CD4-positive, alpha-beta T cell (primary cell): ENCODE measurements at regions of chr1 and their contacts with region 1.

Region 1: GRCh38 chr1:172671591-172671990 is 12.7 kb downstream of the FASLG start:
- DNase-seq: no peak
- ATAC-seq: no peak
- H3K4me3 ChIP-seq: no peak overlapping the region
- H3K4me3 Mint-ChIP-seq: peak overlapping the region; percentile 13
- H3K27ac ChIP-seq: no peak overlapping the region
- H3K27ac Mint-ChIP-seq: no peak overlapping the region
- H3K4me1 ChIP-seq: peaks cover 37% of the 10 kb centered on the region
- H3K4me1 Mint-ChIP-seq: peaks cover 67% of the 10 kb centered on the region
- H3K27me3 ChIP-seq: no peaks in the 10 kb centered on the region
- H3K27me3 Mint-ChIP-seq: no peaks in the 10 kb centered on the region
- CTCF ChIP-seq: no peak

Region 2: DNA sequence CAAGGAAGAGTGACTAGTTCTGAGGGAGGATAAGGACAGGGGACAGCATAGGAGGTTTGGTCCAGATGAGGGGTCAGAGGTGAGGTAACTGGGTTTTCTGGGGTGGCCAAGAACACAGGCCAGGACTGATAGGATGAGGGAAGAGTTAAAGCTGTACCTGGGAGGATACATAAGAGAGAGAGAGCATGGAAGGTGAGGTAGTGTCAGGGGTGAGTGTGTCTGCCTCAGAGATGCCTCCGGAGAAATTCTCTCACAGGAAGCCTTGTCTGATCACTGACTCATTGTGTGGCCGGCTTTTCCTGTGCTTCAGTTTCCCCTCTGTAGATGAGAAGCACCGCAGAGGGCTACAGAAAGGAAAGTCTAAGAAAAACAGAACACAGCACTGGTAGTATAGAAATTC is 27.5 kb after region 1 on chr1:
- CTCF ChIA-PET with region 1: interaction called, 5 read pairs
- POLR2A ChIA-PET with region 1: interaction called, 7 read pairs
- intact Hi-C with region 1: loop called (anchors 1 to 5 kb)
- DNase-seq: peak; percentile 45 to 90 (median 67)
- ATAC-seq: peak; percentile 84
- H3K4me3 ChIP-seq: no peak overlapping the region
- H3K4me3 Mint-ChIP-seq: peak overlapping the region; percentile 46
- H3K27ac ChIP-seq: peak overlapping the region; percentile 73 to 83
- H3K27ac Mint-ChIP-seq: no peak overlapping the region
- H3K4me1 ChIP-seq: peaks cover 70% of the 10 kb centered on the region
- H3K4me1 Mint-ChIP-seq: peaks cover 6% of the 10 kb centered on the region
- H3K27me3 ChIP-seq: no peaks in the 10 kb centered on the region
- H3K27me3 Mint-ChIP-seq: no peaks in the 10 kb centered on the region
- CTCF ChIP-seq: no peak

Region 3: DNA sequence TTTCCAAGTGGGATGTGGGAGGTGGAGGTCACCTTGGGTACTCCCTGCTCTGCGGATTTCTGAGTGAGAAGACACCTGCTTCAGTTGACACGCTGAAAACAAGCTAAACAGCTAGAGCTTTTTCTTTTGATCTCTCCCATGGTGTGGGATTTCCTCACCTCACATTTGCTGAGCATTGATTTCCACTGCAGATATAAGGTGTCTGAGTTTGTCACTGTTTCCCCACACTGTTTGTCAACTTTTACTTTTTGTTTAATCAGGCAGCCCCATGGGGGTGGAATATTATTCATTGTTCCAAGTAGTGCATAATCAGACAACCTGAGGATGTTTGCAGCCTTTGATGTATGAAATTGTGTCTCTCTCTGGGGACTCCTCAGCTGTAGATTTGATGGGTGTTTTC is 36.9 kb after region 1 on chr1:
- CTCF ChIA-PET with region 1: no interaction called
- POLR2A ChIA-PET with region 1: interaction called, 7 read pairs
- intact Hi-C with region 1: loop called in 1 of 2 experiments (anchors 5 kb)
- DNase-seq: peak in 7 of 14 experiments; percentile 4 to 72 (median 49)
- ATAC-seq: peak; percentile 86
- H3K4me3 ChIP-seq: peak overlapping the region; percentile 6
- H3K4me3 Mint-ChIP-seq: peak overlapping the region; percentile 26
- H3K27ac ChIP-seq: no peak overlapping the region
- H3K27ac Mint-ChIP-seq: peak overlapping the region; percentile 50
- H3K4me1 ChIP-seq: peaks cover 34% of the 10 kb centered on the region
- H3K4me1 Mint-ChIP-seq: peaks cover 25% of the 10 kb centered on the region
- H3K27me3 ChIP-seq: no peaks in the 10 kb centered on the region
- H3K27me3 Mint-ChIP-seq: no peaks in the 10 kb centered on the region
- CTCF ChIP-seq: no peak